ENCODE measurements at regions of chr6 and their contacts with region 1.

Region 1: DNA sequence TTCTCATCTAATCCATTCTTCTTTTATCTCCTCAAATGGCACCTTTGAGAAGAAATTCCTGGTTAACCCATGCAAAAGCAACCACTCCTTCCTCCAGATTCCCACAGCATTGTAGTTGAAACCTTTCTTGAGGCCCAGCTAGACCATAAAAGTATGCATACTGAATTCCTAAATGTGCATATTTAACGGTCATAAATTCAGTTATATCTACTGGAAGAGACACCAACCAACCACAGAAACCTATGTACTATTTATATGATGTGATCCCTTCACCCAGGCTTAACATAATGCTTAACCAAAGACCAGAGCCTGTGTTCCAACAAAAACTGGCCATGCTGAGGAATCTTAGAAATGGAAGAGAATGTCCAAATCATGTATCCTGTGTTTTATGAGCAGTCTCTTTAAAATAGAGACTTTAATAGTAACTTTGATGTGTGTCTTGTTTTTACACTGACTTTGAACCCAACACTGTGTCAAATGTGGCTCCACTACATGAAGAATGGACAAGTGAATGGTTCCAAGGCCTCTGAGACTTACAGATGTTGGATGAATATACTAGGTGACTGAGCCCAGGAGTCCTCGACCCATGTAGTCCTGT is 11.4 kb upstream of the TAF8 start:
- DNase-seq: no peak
- H3K4me3 Mint-ChIP-seq: peak overlapping the region; percentile 78
- H3K27ac Mint-ChIP-seq: peak overlapping the region; percentile 96
- H3K4me1 Mint-ChIP-seq: peaks cover 67% of the 10 kb centered on the region
- H3K27me3 Mint-ChIP-seq: no peaks in the 10 kb centered on the region

Region 2: DNA sequence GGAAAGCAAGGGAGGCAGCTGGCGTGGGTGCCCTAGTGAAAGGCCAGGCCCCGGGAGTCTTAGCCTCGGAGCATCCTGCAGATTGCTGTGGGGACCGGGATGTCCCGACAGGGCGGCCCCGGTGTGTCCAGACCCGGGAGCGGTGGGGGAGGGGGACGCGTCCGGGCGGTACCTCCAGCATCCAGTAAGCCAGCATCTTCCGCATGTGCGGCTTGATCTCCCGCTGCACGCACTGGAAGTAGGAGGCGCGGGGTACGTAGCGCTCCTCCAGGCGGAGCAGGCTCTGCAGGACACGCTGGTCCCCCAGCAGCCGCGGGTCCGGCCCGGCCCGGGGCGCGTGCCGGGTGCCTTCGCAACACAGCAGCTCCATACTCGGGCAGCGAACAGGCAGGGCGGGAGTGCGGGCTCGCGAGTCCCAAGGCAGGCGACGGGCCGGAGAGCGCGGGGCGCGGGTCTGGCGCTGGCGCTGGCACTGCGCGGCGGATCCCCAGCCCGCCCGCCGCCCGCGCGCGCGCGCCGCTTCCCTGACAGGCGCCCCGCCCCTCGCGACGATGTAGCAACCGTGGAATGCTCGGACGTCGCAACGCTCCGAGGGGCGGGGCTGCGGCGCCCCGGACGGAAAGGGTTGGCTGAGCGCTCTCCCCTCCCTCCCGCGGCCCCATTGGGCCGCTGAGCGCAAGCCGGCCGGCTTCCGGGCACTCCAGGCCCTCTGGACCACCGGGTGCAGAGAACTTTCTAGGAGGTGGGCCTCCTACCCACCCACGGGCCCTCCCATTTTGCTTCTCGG is 97.4 kb before region 1 on chr6 and contains the start of gene CCND3:
- CTCF ChIA-PET with region 1: interaction called, 470 read pairs
- POLR2A ChIA-PET with region 1: interaction called, 177 read pairs
- intact Hi-C with region 1: loop called (anchors 1 kb)
- DNase-seq: peak; percentile 94
- H3K4me3 Mint-ChIP-seq: peak within 1 kb of the TSS; percentile 99
- H3K27ac Mint-ChIP-seq: peak within 1 kb of the TSS; percentile 94
- H3K4me1 Mint-ChIP-seq: peaks cover 50% of the 10 kb centered on the region
- H3K27me3 Mint-ChIP-seq: no peaks in the 10 kb centered on the region
- total RNA-seq, gene CCND3: 570 to 573 TPM

Region 3: GRCh38 chr6:42009966-42010891 is 28.7 kb before region 1 on chr6:
- CTCF ChIA-PET with region 1: interaction called, 7 read pairs
- POLR2A ChIA-PET with region 1: interaction called, 4 read pairs
- intact Hi-C with region 1: loop called (anchors 1 kb)
- DNase-seq: peak; percentile 67
- H3K4me3 Mint-ChIP-seq: peak overlapping the region; percentile 68
- H3K27ac Mint-ChIP-seq: peak overlapping the region; percentile 97
- H3K4me1 Mint-ChIP-seq: peaks cover 69% of the 10 kb centered on the region
- H3K27me3 Mint-ChIP-seq: no peaks in the 10 kb centered on the region

Region 4: DNA sequence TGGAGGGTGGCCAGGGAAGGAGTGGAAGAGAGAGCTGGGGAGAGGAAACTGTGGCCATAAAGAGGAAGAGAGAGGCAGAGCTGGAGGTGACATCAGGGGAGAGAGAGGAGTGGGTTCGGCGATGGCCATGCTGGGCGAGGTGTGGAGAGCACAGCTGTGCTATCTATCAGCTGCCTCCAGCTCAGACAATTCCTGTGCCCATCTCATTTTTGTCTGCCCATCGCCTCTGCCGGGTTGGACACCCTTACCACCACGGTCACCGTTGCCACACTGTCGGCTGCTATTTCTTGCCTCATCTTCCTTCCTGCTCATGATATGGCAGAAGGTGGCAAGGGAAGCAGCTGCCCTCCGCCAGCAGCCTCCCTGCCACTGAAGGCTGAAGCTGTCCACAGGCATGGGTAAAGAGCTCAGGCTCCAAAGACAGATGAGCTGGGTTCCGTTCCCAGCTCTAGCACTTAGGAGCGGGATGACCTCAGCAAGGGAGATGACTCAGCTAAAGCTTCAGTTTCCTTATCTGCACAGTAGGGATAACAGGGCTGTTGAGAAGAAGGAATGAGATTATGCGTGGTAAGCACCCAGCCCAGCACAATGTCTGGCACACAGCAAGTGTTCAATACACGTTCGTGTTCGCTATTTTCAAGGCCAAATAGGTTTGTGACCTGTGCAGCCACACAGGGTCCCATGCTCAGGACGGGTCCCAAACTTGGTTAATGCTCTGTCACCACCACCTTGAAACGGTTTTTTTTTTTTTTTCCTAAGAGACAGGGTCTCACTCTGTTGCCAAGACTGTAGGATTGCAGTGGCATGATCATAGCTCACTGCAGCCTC is 10.5 kb before region 1 on chr6:
- CTCF ChIA-PET with region 1: interaction called, 20 read pairs
- POLR2A ChIA-PET with region 1: interaction called, 12 read pairs
- intact Hi-C with region 1: loop called (anchors 1 kb)
- DNase-seq: peak; percentile 58
- H3K4me3 Mint-ChIP-seq: peak overlapping the region; percentile 77
- H3K27ac Mint-ChIP-seq: peak overlapping the region; percentile 97
- H3K4me1 Mint-ChIP-seq: peaks cover 82% of the 10 kb centered on the region
- H3K27me3 Mint-ChIP-seq: no peaks in the 10 kb centered on the region

Measured in activated CD4-positive, alpha-beta memory T cell treated with anti-CD3 and anti-CD28 coated beads for 36 hours (primary cell).